Tibial artery (tissue), 4 donors: ENCODE measurements at regions of chr12 and their contacts with region 1.

Region 1: GRCh38 chr12:100199347-100200149 is 1.1 kb upstream of the ACTR6 start:
- DNase-seq: peak; percentile 51 to 86
- H3K4me3 ChIP-seq: peak overlapping the region; percentile 70 to 90
- H3K27ac ChIP-seq: peak overlapping the region; percentile 82 to 86
- H3K4me1 ChIP-seq: peaks cover 0 to 41% (median 19%) of the 10 kb centered on the region in 4 donors
- H3K27me3 ChIP-seq: no peaks in the 10 kb centered on the region
- CTCF ChIP-seq: no peak

Region 2: GRCh38 chr12:100154474-100155247 is 44.9 kb before region 1 on chr12:
- intact Hi-C with region 1: loop called (anchors 5 kb)
- DNase-seq: peak; percentile 67 to 74
- H3K4me3 ChIP-seq: no peak overlapping the region
- H3K27ac ChIP-seq: no peak overlapping the region
- H3K4me1 ChIP-seq: no peaks in the 10 kb centered on the region
- H3K27me3 ChIP-seq: no peaks in the 10 kb centered on the region
- CTCF ChIP-seq: peak; percentile 68 to 70